Upper lobe of right lung (tissue), 1 donor: ENCODE measurements at regions of chr21 and their contacts with region 1.

Region 1: DNA sequence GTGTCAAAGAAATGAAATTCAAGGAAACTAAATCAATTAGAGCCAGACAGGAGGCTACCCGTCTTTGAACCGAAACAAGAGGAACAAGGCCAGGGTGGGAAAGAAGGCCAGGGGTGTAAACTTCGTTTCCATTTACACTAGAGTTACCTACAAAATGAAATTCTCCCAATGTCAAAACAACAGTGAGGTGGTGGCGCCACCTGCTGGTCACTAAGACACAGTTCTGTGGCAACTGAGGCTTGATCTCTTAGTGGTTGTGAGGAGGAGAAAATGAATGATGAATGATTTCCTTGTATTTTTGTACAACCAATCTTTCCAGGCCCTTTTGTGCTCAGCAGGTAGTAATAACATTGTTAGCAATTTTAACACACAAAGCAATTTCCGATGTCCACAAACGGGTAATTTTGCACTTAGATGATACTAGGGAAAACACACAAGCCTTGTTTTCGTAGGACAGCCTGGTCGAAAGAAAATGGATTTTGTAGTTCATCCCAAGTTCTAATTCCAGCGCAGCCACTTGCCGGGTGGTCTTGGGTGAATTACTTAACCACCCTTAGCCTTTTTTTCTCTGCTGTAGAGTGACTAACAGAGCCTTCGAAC is 54.8 kb upstream of the SOD1 start:
- DNase-seq: peak; percentile 79
- ATAC-seq: peak; percentile 88
- H3K4me3 ChIP-seq: no peak overlapping the region
- H3K27ac ChIP-seq: no peak overlapping the region
- H3K4me1 ChIP-seq: no peaks in the 10 kb centered on the region
- H3K27me3 ChIP-seq: no peaks in the 10 kb centered on the region
- CTCF ChIP-seq: peak; percentile 94

Region 2: DNA sequence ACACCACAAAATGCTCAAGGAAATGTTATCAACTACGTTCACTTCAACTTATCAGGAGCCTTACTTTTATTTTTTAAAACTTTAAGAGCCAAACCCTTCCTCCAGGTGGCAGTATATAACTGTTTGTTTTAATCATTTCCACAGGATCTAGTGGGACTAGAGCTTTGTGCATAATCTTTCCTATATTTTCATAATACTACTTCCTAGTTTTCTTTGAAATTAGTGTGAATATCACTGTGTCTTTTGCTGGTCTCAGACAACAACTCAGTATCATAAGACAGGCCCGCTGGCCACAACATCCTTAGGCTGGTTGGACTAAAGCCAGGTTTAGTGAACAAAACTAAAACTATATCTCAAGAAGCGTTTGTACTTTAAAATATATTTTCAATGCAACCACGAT is 406.1 kb before region 1 on chr21:
- intact Hi-C with region 1: loop called (anchors 5 kb)
- DNase-seq: no peak
- ATAC-seq: peak; percentile 76
- H3K4me3 ChIP-seq: no peak overlapping the region
- H3K27ac ChIP-seq: no peak overlapping the region
- H3K4me1 ChIP-seq: peaks cover 13% of the 10 kb centered on the region
- H3K27me3 ChIP-seq: no peaks in the 10 kb centered on the region
- CTCF ChIP-seq: peak; percentile 65

Region 3: DNA sequence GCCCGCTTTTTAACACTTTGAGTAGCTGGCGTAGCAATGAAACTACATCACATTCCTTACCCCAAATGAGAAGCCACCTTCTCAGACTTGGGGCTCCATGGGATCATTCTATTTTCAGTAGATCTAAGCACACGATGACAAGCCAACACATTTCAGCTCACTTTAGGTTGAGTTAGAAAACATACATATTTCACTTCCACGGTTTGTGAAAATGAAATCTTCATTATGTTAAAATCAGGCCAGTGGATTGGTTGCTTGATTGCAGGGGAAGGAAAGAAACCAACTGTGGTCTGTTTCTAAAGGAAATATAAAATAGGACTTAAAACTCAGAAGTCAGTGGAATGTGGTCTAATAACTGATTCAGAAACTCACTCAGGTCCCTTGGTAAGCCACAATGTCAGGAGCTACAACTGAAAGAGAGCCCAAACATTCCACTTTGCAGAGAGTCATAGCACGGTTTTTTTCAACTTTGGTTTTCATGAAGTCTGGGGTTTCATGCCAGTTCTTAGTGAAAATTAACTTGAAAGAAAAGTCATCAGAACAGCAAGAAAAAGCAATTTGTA is 178.4 kb before region 1 on chr21:
- intact Hi-C with region 1: no loop called
- DNase-seq: no peak
- ATAC-seq: no peak
- H3K4me3 ChIP-seq: no peak overlapping the region
- H3K27ac ChIP-seq: no peak overlapping the region
- H3K4me1 ChIP-seq: no peaks in the 10 kb centered on the region
- H3K27me3 ChIP-seq: no peaks in the 10 kb centered on the region
- CTCF ChIP-seq: no peak